A673 (cell line): ENCODE measurements at regions of chr6 and their contacts with region 1.

Region 1: DNA sequence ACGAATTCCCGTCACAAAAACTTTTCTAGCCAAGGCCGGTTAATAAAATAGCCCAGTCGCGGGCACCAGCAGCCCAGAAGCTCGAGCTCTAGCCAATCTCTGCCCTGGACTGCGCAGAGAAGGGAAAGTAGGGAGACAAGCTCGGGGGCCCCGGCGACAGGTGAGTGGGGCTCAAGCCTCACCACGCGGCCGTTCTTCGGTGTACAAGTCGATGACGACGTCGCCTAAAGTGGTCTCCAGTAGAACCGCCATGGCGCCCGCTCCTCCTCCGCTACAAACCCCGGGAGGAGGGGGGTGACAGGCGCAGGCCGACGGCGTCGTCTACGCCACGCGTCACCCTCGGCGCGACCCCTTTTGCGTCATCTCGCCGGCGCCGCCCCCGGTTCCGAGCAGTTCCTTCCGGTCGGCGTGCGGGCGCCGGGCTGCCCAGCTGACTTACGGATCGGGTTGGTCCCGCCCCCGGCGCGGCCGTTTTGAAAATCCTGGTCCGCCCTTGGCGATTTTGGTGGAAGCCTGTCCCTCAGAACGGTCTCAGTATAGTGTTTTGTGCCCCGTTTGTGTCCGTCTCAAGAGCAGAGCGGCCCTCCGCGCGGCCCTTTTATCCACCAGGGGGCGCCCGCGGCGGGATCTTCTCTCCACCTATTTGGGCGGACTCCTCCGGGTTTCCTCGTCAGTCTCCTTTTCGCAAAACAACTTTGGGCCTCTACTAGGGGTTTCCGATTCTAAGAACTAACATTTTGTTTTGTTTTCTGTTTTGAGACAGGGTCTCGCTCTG is at the start of gene PPIL4:
- DNase-seq: peak; percentile 96
- H3K4me3 ChIP-seq: peak within 1 kb of the TSS; percentile 82
- H3K27ac ChIP-seq: peak within 1 kb of the TSS; percentile 89
- H3K4me1 ChIP-seq: no peaks in the 10 kb centered on the region
- H3K27me3 ChIP-seq: no peaks in the 10 kb centered on the region
- CTCF ChIP-seq: peak; percentile 98
- total RNA-seq, gene PPIL4: 40.3 and 43.0 TPM in 2 replicates

Region 2: GRCh38 chr6:149529650-149530049 is 16.3 kb before region 1 on chr6:
- CTCF ChIA-PET with region 1: interaction called, 15 read pairs
- POLR2A ChIA-PET with region 1: no interaction called
- intact Hi-C with region 1: no loop called
- DNase-seq: no peak
- H3K4me3 ChIP-seq: no peak overlapping the region
- H3K27ac ChIP-seq: no peak overlapping the region
- H3K4me1 ChIP-seq: no peaks in the 10 kb centered on the region
- H3K27me3 ChIP-seq: no peaks in the 10 kb centered on the region
- CTCF ChIP-seq: no peak

Region 3: DNA sequence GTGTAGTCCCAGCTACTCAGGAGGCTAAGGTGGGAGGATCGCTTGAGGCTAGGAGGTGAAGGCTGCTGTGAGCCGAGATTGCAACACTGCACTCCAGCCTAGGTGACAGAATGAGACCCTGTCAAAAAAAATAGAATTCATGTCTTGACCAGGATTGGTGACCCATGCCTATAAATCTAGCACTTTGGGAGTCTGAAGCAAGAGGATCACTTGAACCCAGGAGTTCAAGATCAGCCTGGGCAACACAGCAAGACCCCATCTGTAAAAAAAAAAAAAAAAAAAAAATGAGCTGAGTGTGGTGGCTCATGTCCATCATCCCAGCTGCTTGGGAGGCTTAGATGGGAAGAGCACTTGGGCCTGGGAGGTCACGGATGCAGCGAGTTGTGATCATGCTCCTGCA is 54.6 kb after region 1 on chr6:
- CTCF ChIA-PET with region 1: interaction called, 5 read pairs
- POLR2A ChIA-PET with region 1: interaction called, 14 read pairs
- intact Hi-C with region 1: no loop called
- DNase-seq: no peak
- H3K4me3 ChIP-seq: no peak overlapping the region
- H3K27ac ChIP-seq: no peak overlapping the region
- H3K4me1 ChIP-seq: no peaks in the 10 kb centered on the region
- H3K27me3 ChIP-seq: no peaks in the 10 kb centered on the region
- CTCF ChIP-seq: no peak

Region 4: GRCh38 chr6:149925974-149926777 is 380.2 kb after region 1 on chr6:
- CTCF ChIA-PET with region 1: no interaction called
- POLR2A ChIA-PET with region 1: no interaction called
- intact Hi-C with region 1: loop called (anchors 5 kb)
- DNase-seq: peak; percentile 90
- H3K4me3 ChIP-seq: peak overlapping the region; percentile 59
- H3K27ac ChIP-seq: no peak overlapping the region
- H3K4me1 ChIP-seq: peaks cover 12% of the 10 kb centered on the region
- H3K27me3 ChIP-seq: peaks cover 19% of the 10 kb centered on the region
- CTCF ChIP-seq: peak; percentile 93

Region 5: DNA sequence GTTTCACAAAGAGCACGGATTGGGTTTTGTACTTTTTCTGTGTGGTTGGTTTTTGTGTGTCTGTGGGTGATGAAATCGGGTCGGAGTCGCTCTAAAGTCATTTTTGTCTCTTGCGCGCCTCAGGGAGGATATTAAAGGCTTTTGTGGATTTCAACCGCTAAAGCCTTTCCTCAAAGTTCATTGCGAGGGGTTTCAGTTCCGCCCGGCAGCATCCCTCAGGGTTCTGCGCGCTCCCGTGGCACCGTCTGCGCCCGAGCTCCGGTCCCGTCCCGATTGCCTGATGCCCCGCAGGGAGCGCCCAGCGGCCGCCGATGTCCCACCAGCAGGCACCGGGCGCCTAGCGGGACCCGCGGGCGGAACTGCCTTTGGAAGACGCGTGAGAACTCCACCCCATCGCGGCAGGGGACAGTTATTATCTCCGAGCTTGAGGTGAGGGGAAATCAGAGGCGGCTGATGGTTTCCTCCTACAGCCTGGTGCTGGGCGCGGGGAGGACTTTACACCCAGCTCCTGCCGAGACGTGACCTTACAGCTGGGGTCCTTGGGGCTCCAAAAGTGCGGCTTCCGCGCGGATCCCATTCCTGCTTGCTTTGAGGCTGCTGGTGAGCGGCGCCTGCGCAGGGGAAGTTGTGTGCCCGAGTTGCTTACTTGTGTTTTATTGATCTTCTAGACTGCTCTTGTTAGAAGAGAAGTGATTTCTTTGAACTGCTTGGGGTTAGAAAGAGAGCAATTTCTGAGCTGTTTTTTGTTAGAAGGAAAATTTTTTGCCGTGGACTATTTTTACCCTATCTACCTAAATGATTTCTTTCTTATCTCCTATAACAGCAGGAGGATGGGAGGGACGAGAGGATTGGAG is 444.9 kb after region 1 on chr6:
- CTCF ChIA-PET with region 1: no interaction called
- POLR2A ChIA-PET with region 1: no interaction called
- intact Hi-C with region 1: no loop called
- DNase-seq: peak; percentile 34
- H3K4me3 ChIP-seq: peak overlapping the region; percentile 43
- H3K27ac ChIP-seq: no peak overlapping the region
- H3K4me1 ChIP-seq: peaks cover 14% of the 10 kb centered on the region
- H3K27me3 ChIP-seq: peaks cover 92% of the 10 kb centered on the region
- CTCF ChIP-seq: no peak